Activated CD4-positive, alpha-beta memory T cell treated with anti-CD3 and anti-CD28 coated beads for 36 hours (primary cell): ENCODE measurements at regions of chr12 and their contacts with region 1.

Region 1: DNA sequence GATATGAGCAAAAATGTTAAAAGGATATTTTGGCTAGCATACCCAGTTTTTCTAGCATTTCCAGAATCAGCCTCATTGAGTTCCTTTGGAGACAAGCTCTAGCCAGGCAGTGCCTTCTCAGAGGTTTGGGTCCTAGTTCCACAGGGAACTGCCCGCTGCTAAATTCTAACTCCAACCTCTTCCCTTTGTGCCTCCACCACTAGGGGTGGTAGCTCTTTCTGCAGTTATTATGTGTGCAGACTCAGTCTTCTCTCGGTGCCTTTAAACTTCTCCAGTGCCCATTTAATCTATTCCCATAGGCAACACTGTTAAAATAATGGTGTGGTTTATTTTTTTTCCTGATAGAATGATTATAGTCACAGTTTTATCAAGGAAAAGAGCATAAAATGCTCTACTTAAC is 21.5 kb upstream of the SLC25A3 start:
- DNase-seq: no peak
- H3K4me3 Mint-ChIP-seq: no peak overlapping the region
- H3K27ac Mint-ChIP-seq: no peak overlapping the region
- H3K4me1 Mint-ChIP-seq: peaks cover under 1% of the 10 kb centered on the region
- H3K27me3 Mint-ChIP-seq: no peaks in the 10 kb centered on the region

Region 2: GRCh38 chr12:98551787-98552186 is 20.2 kb before region 1 on chr12:
- CTCF ChIA-PET with region 1: interaction called, 10 read pairs
- POLR2A ChIA-PET with region 1: no interaction called
- intact Hi-C with region 1: no loop called
- DNase-seq: no peak
- H3K4me3 Mint-ChIP-seq: no peak overlapping the region
- H3K27ac Mint-ChIP-seq: no peak overlapping the region
- H3K4me1 Mint-ChIP-seq: peaks cover 11% of the 10 kb centered on the region
- H3K27me3 Mint-ChIP-seq: no peaks in the 10 kb centered on the region

Region 3: DNA sequence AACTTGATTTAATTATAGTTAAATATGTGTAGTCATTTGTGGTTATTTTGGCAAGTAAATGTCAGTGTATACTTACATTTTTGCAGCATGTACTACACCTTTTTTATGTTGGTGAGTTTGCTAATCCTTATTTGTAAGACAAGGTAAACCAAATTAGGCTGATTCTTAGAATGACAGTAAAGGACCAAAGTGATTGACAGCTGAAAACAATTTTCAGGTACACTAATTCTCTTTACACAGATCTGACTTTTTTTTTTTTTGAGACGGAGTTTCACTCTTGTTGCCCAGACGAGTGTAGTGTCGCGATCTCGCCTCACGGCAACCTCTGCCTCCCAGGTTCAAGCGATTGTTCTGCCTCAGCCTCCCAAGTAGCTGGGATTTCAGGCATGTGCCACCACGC is 29.9 kb after region 1 on chr12:
- CTCF ChIA-PET with region 1: interaction called, 42 read pairs
- POLR2A ChIA-PET with region 1: no interaction called
- intact Hi-C with region 1: no loop called
- DNase-seq: no peak
- H3K4me3 Mint-ChIP-seq: no peak overlapping the region
- H3K27ac Mint-ChIP-seq: no peak overlapping the region
- H3K4me1 Mint-ChIP-seq: peaks cover 10% of the 10 kb centered on the region
- H3K27me3 Mint-ChIP-seq: no peaks in the 10 kb centered on the region

Region 4: DNA sequence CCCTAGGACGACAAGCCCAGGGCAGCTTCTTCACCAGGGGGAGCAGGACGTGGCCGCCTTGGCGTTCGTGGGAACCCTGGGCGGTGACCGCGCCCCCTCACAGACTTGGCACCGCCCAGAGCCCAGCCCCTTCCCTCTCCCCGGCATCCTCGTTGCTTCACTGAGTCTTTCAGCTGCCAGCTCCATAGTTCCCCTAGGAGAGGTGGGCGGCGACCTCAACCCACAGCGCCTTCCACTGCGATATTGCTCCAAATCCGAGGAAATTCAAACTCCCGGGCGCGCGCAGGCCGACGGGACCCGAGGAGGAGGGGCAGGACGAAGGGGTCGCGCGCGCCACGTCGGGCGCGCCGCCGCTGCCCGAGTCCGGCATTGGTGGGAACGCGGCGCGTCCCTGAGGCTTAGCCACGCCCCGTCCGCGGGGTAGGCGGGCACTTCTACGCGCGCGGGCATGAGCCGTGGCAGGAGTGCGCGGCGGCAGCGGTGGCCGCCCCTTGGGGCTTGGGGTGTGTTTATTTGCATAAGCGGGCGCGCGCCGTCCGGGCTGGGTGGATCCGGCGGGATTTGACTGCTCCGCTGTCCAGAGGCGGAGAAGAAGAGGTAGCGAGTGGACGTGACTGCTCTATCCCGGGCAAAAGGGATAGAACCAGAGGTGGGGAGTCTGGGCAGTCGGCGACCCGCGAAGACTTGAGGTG is 72.8 kb after region 1 on chr12 and contains the starts of genes APAF1 and IKBIP:
- CTCF ChIA-PET with region 1: interaction called, 13 read pairs
- POLR2A ChIA-PET with region 1: no interaction called
- intact Hi-C with region 1: loop called (anchors 2 kb)
- DNase-seq: peak; percentile 98
- H3K4me3 Mint-ChIP-seq: peak within 1 kb of the TSS; percentile 96
- H3K27ac Mint-ChIP-seq: peak within 1 kb of the TSS; percentile 95
- H3K4me1 Mint-ChIP-seq: peaks cover 28% of the 10 kb centered on the region
- H3K27me3 Mint-ChIP-seq: no peaks in the 10 kb centered on the region
- total RNA-seq, gene APAF1: 19.6 to 20.8 TPM
- total RNA-seq, gene IKBIP: 24.9 to 26.2 TPM

Region 5: DNA sequence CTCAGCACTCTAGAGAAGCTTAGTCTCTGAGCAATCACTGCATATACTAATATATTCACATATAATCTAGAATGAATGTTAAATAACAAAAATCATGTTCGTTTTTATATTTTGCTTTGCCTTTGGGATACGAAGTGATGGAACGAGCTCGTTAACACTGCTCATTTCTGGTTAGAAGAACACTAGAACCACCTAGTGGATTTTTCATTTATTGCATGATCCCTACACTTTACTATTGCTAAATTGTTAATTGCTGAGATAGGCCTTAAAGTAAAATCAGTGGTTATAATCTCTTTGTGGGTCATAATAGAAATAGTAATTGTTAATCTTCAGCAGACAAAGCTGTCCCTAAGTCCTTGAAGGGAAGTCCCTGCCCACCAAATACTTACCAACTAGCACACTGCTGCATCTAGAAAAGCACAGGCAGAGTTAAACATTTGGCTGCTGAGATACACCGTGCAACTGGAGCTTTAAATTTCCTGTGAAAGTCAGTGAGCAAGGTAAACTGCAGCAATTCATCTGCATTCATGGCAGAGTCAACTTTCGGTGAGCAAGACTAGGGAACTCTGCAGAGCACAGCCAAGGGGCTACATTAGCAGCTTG is 426.8 kb after region 1 on chr12:
- CTCF ChIA-PET with region 1: interaction called, 27 read pairs
- POLR2A ChIA-PET with region 1: no interaction called
- intact Hi-C with region 1: loop called (anchors 2 kb)
- DNase-seq: no peak
- H3K4me3 Mint-ChIP-seq: no peak overlapping the region
- H3K27ac Mint-ChIP-seq: no peak overlapping the region
- H3K4me1 Mint-ChIP-seq: no peaks in the 10 kb centered on the region
- H3K27me3 Mint-ChIP-seq: peaks cover 2% of the 10 kb centered on the region